Natural killer cell (primary cell): ENCODE measurements at regions of chr20 and their contacts with region 1.

Region 1: GRCh38 chr20:62793912-62794724 is 2.2 kb upstream of the MRGBP start:
- DNase-seq: peak; percentile 92 to 97
- ATAC-seq: peak; percentile 81 to 91 (median 85)
- H3K4me3 ChIP-seq: peak overlapping the region; percentile 81
- H3K4me3 Mint-ChIP-seq: peak overlapping the region; percentile 92
- H3K27ac ChIP-seq: peak overlapping the region; percentile 100
- H3K27ac Mint-ChIP-seq: peak overlapping the region; percentile 93 to 95
- H3K4me1 ChIP-seq: peaks cover 39% of the 10 kb centered on the region
- H3K4me1 Mint-ChIP-seq: peaks cover 27 to 65% of the 10 kb centered on the region in 2 donors
- H3K27me3 ChIP-seq: no peaks in the 10 kb centered on the region
- H3K27me3 Mint-ChIP-seq: no peaks in the 10 kb centered on the region
- CTCF ChIP-seq: no peak

Region 2: DNA sequence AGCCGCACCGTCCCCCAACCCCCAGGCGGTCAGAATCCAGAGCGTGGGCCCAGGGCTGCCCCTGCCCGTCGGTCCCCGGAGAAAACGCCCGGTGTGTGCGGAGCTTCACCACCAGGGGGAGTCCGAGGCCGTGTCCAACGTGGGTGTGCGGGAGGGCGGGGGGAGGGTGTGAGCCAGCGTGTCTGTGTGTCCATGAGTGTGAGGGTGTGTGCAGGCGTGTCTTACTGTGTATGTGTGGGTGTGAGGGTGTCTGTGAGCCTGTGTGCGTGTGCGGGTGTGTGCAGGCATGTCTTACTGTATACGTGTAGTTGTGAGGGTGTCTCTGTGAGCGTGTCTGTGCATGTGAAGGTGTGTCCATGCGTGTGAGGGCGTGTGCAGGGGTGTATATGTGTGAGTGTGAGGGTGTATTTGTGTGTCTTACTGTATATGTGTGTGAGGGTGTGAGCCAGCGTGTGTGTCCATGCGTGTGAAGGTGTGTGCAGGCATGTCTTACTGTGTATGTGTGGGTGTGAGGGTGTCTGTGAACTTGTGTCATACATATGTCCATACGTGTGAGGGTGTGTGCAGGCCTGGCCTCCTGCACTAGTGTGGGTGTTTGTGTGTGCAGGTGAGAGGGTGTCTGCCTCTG is 293.8 kb before region 1 on chr20:
- intact Hi-C with region 1: loop called (anchors 5 kb)
- DNase-seq: peak; percentile 75 to 88
- ATAC-seq: peak; percentile 79 to 82 (median 79)
- H3K4me3 ChIP-seq: no peak overlapping the region
- H3K4me3 Mint-ChIP-seq: no peak overlapping the region
- H3K27ac ChIP-seq: no peak overlapping the region
- H3K27ac Mint-ChIP-seq: peak overlapping the region in 1 of 2 donors; percentile 62
- H3K4me1 ChIP-seq: peaks cover 14% of the 10 kb centered on the region
- H3K4me1 Mint-ChIP-seq: peaks cover 0 to 12% of the 10 kb centered on the region in 2 donors
- H3K27me3 ChIP-seq: no peaks in the 10 kb centered on the region
- H3K27me3 Mint-ChIP-seq: no peaks in the 10 kb centered on the region
- CTCF ChIP-seq: peak; percentile 74

Region 3: DNA sequence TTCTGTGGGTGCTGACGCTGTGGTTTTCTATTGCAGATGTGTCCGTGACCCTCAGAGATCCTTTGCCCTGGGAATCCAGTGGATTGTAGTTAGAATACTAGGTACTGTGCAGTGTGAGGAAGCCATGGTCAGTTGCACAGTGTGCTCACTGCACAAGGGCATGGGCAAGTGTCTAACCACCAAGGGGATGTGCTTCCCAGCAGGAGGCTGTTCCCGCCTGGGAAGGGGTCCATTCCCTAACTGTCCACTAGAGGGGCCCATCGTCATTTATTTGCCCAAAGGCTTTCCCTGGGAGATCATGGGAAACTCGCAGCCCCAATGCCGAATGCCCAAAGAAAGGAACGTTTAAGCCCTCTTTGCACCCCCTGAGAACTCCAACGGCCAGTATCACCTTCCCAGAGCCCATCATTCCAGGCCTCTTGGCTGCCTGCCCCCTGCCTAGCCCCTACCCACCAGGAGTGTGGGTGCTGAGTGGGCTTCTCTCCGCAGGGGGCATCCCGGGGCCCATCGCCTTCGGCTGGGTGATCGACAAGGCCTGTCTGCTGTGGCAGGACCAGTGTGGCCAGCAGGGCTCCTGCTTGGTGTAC is 125.6 kb before region 1 on chr20:
- intact Hi-C with region 1: loop called (anchors 5 kb)
- DNase-seq: peak; percentile 36 to 69
- ATAC-seq: peak; percentile 48 to 70 (median 61)
- H3K4me3 ChIP-seq: no peak overlapping the region
- H3K4me3 Mint-ChIP-seq: no peak overlapping the region
- H3K27ac ChIP-seq: no peak overlapping the region
- H3K27ac Mint-ChIP-seq: no peak overlapping the region
- H3K4me1 ChIP-seq: no peaks in the 10 kb centered on the region
- H3K4me1 Mint-ChIP-seq: no peaks in the 10 kb centered on the region
- H3K27me3 ChIP-seq: no peaks in the 10 kb centered on the region
- H3K27me3 Mint-ChIP-seq: no peaks in the 10 kb centered on the region
- CTCF ChIP-seq: peak; percentile 68

Region 4: DNA sequence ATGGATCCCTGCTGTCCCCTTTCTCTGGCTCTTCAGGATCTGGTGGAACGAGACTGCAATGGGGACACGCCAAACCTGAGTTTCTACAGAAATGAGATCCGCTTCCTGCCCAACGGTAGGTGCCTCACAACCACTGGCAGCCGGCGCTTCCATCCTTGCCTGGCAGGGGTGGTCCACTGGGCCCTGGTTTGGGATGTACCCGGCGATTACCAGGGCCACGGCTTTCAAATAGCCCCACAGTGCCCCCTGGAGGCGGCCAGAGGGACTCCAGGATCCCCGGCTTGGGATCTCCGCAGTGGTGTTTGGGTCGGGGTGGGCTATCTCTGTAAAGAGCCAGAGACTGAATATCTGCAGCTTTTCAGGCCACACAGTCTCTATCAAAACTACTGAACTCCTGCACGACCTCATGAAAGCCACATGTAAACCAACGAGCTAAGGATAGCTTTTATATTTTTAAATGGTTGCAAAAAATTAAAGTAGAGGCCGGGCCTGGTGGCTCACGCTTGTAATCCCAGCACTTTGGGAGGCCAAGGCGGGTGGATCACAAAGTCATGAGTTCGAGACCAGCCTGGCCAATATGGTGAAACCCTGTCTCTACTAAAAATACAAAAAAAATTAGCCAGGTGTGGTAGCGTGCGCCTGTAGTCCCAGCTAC is 14.2 kb after region 1 on chr20:
- intact Hi-C with region 1: loop called (anchors 1 kb)
- DNase-seq: peak; percentile 76 to 84
- ATAC-seq: peak; percentile 60 to 70 (median 63)
- H3K4me3 ChIP-seq: no peak overlapping the region
- H3K4me3 Mint-ChIP-seq: peak overlapping the region; percentile 71
- H3K27ac ChIP-seq: no peak overlapping the region
- H3K27ac Mint-ChIP-seq: peak overlapping the region; percentile 45 to 65
- H3K4me1 ChIP-seq: peaks cover 43% of the 10 kb centered on the region
- H3K4me1 Mint-ChIP-seq: peaks cover 5 to 23% of the 10 kb centered on the region in 2 donors
- H3K27me3 ChIP-seq: no peaks in the 10 kb centered on the region
- H3K27me3 Mint-ChIP-seq: no peaks in the 10 kb centered on the region
- CTCF ChIP-seq: peak; percentile 94

Region 5: GRCh38 chr20:62875419-62876361 is 81.6 kb after region 1 on chr20:
- intact Hi-C with region 1: no loop called
- DNase-seq: peak in 1 of 2 donors; percentile 36
- ATAC-seq: peak in 1 of 3 donors; percentile 26
- H3K4me3 ChIP-seq: no peak overlapping the region
- H3K4me3 Mint-ChIP-seq: peak overlapping the region; percentile 59
- H3K27ac ChIP-seq: no peak overlapping the region
- H3K27ac Mint-ChIP-seq: peak overlapping the region in 1 of 2 donors; percentile 51
- H3K4me1 ChIP-seq: peaks cover 11% of the 10 kb centered on the region
- H3K4me1 Mint-ChIP-seq: peaks cover 7 to 24% of the 10 kb centered on the region in 2 donors
- H3K27me3 ChIP-seq: no peaks in the 10 kb centered on the region
- H3K27me3 Mint-ChIP-seq: peaks cover 0 to 8% of the 10 kb centered on the region in 2 donors
- CTCF ChIP-seq: no peak